A549 (cell line): ENCODE measurements at regions of chr5 and their contacts with region 1.

Region 1: DNA sequence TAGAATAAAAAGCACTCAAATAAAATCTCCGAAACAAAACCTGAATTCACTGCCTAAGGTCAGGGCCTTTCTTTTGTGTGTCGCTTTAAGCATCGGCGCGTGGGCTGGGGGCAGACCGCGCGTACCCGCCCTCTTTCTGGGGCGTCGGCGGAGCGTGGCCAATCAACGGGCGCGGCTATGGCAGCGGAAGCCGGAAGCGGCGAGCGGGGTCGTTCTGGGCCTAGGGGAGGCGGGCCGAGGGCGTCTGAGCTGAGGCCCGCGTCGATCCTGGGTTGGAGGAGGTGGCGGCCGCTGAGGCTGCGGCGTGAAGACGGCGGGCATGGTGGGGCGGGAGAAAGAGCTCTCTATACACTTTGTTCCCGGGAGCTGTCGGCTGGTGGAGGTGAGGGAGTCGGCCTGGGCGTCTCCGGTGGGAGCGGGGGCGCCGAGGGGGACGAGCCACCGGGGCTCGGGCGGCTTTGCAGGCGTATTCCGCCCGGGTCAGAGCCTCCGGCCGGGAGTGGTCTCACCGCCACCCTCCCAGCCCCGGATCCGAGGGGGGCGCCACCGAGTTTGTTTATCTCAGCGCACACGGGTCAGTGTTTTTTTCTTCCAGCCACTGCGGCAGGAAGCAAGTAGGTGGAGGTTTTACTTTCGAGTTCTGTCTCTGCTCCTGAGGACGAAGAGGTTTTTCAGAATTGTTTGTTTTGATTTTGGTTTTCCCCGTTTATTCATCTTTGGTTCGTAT is at the start of gene MAT2B:
- DNase-seq: peak; percentile 89 to 95
- ATAC-seq: peak; percentile 91 to 96
- H3K4me3 ChIP-seq: peak within 1 kb of the TSS; percentile 77
- H3K27ac ChIP-seq: peak within 1 kb of the TSS; percentile 87 to 93
- H3K4me1 ChIP-seq: peaks cover 38% of the 10 kb centered on the region
- CTCF ChIP-seq: peak; percentile 61
- EP300 ChIP-seq: no peak
- POLR2A ChIP-seq: peak; percentile 85
- RAD21 ChIP-seq: no peak
- polyA plus RNA-seq, gene MAT2B: 54.9 and 74.0 TPM in 2 replicates

Region 2: GRCh38 chr5:163459922-163460766 is 45.4 kb before region 1 on chr5 and contains the starts of genes HMMR and NUDCD2:
- CTCF ChIA-PET with region 1: interaction called, 7 read pairs
- POLR2A ChIA-PET with region 1: interaction called, 28 read pairs
- DNase-seq: peak; percentile 85 to 99
- ATAC-seq: peak; percentile 86 to 93
- H3K4me3 ChIP-seq: peak within 1 kb of the TSS; percentile 73
- H3K27ac ChIP-seq: peak within 1 kb of the TSS; percentile 91 to 92
- H3K4me1 ChIP-seq: peaks cover 27% of the 10 kb centered on the region
- CTCF ChIP-seq: 0 out of 3 replicates have a peak, but pooled peaks have one; percentile 21
- EP300 ChIP-seq: no peak
- POLR2A ChIP-seq: peak; percentile 95
- RAD21 ChIP-seq: no peak
- polyA plus RNA-seq, gene HMMR: 32.9 and 66.0 TPM in 2 replicates
- polyA plus RNA-seq, gene NUDCD2: 17.0 and 22.3 TPM in 2 replicates

Region 3: DNA sequence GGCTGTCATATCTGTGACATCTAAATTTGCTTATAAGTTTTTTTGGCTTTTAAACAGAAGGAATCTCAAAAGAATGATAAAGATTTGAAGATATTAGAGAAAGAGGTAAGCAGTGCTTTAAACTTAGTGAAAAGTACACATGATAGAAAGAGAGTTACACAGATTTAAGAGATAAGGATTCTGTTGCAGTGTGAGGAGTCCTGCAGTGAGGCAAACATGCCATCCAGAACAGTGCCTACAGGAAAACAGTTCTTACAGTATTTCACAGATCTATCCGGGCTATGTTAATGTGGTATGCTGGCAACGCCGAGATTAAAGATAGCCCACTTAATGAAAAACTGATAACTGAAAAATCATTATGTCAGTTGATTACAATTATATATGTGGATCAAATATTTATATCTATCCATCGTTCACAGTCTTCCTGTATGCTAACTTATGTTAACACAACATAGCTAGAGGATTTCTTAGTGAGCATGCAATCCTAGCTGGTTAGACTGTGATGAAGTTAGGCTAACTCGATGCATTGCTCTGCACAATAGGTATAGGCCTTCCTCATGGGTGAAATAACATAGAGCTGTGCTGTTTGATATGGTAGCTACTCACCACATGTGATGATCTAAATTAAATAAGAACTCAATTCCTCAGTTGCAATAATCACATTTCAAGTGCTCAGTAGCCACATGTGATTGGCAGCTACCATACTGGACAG is 37.7 kb before region 1 on chr5:
- CTCF ChIA-PET with region 1: interaction called, 18 read pairs
- POLR2A ChIA-PET with region 1: interaction called, 3 read pairs
- DNase-seq: no peak
- ATAC-seq: no peak
- H3K4me3 ChIP-seq: no peak overlapping the region
- H3K27ac ChIP-seq: no peak overlapping the region
- H3K4me1 ChIP-seq: peaks cover 7% of the 10 kb centered on the region
- CTCF ChIP-seq: no peak
- EP300 ChIP-seq: no peak
- POLR2A ChIP-seq: no peak
- RAD21 ChIP-seq: no peak

Region 4: DNA sequence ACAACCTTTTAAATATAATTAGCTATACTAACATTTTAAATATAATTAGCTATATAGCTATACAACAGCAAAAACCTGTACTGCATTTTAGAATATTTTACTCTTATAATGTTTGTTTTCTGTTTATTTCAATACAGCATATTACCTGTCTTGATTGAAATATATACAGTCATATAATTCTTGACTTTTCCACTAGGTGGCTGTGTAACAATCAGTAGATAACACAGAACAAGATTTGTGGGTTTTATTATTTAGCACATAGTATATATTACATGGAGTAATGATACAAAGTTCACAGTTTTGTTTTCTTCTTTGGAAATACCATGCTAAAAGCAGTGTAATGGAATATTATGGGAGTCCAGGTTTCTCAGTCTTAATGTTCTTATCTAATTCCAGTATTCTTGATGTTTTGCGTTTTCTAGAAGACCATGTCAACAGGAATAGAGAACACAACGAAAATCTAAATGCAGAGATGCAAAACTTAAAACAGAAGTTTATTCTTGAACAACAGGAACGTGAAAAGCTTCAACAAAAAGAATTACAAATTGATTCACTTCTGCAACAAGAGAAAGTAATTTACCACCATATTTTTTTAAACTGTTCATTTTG is 31.8 kb before region 1 on chr5:
- CTCF ChIA-PET with region 1: interaction called, 18 read pairs
- POLR2A ChIA-PET with region 1: interaction called, 3 read pairs
- DNase-seq: peak in 1 of 2 experiments; percentile 18
- ATAC-seq: peak; percentile 50 to 68; a peak in 2 of 6 replicates
- H3K4me3 ChIP-seq: no peak overlapping the region
- H3K27ac ChIP-seq: no peak overlapping the region
- H3K4me1 ChIP-seq: peaks cover 6% of the 10 kb centered on the region; the same call in 2 of the 3 replicates
- CTCF ChIP-seq: peak; percentile 16; the same call in 1 of the 3 replicates
- EP300 ChIP-seq: no peak
- POLR2A ChIP-seq: no peak
- RAD21 ChIP-seq: no peak